GM12878 (cell line): ENCODE measurements at regions of chr11 and their contacts with region 1.

Region 1: DNA sequence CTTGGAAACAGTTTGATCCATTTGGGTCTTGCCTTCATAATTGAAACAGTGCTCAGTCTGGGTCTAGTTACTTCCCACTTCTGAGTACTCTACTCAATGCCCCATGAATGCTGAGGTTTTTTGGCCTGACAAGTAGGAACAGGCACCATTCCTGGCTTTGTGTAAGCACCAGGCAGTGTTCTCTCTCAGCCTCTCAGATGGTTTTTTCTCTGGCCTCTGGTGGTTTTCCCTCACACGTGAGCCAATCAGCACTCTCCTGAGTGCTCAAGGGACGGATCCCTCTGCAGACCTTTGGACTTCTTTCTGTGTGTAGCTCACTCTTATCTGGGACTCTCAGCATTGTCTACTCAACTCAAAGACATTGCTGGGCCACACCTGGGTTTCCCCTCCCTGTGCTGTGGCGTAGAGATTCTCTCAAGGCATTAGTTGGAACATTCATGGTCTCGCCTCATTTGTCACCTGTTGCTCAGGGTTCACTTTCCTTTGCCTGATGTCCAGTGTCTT is 21.3 kb downstream of the SIK2 start:
- DNase-seq: peak; percentile 60
- ATAC-seq: peak; percentile 99
- H3K4me3 ChIP-seq: no peak overlapping the region
- H3K27ac ChIP-seq: peak overlapping the region; percentile 12; the same call in 1 of the 2 replicates
- H3K4me1 ChIP-seq: no peaks in the 10 kb centered on the region
- H3K27me3 ChIP-seq: no peaks in the 10 kb centered on the region
- CTCF ChIP-seq: no peak
- EP300 ChIP-seq: 0 out of 4 replicates have a peak, but pooled peaks of 1 of the 2 experiments have one; percentile 15
- POLR2A ChIP-seq: no peak
- RAD21 ChIP-seq: no peak

Region 2: DNA sequence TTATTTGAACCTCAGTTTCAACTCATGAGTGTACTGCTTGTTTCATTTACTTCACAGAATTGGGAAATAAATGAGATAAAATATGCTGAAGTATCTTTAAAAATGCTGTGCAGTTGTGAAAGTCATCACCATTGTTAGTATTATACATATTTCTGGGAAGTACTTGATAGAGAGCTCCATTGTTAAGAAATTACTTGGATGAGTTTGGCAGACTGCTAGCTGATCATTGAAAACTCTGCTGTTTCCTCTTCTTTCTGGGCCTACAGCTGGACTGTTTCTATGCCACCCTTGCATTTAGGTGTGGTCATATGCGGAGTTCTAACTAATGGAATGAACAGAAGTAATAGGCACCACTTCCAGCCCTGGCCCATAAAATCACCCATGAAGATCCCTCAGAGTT is 11.4 kb before region 1 on chr11:
- CTCF ChIA-PET with region 1: interaction called, 3 read pairs
- POLR2A ChIA-PET with region 1: interaction called, 4 read pairs
- RAD21 ChIA-PET with region 1: interaction called, 7 read pairs
- SMC1A ChIA-PET with region 1: interaction called, 16 read pairs
- in situ Hi-C with region 1: no loop called
- intact Hi-C with region 1: no loop called
- DNase-seq: no peak
- ATAC-seq: no peak
- H3K4me3 ChIP-seq: no peak overlapping the region
- H3K27ac ChIP-seq: no peak overlapping the region
- H3K4me1 ChIP-seq: no peaks in the 10 kb centered on the region
- H3K27me3 ChIP-seq: no peaks in the 10 kb centered on the region
- CTCF ChIP-seq: no peak
- EP300 ChIP-seq: no peak
- POLR2A ChIP-seq: no peak
- RAD21 ChIP-seq: no peak

Region 3: DNA sequence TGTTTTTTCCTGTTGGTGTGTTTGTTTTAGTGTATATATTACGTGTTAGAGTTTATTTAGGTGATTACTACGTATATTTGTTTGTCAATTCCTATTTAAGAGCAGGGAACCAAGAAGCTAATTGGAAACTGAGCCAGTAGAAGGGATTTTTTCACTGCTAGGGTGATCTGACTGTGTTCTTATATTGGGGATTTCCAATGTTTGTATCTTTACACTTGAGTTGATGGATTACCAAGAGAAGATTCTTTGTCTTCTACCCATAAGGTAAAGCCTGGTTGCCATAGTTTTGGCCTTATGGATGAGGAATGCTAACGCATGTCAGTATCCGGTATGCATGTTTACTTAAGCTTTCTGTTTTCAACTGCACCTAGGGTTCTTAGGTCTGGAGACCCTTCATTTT is 14.3 kb after region 1 on chr11:
- CTCF ChIA-PET with region 1: interaction called, 5 read pairs
- POLR2A ChIA-PET with region 1: interaction called, 10 read pairs
- RAD21 ChIA-PET with region 1: interaction called, 3 read pairs
- SMC1A ChIA-PET with region 1: interaction called, 15 read pairs
- in situ Hi-C with region 1: no loop called
- intact Hi-C with region 1: no loop called
- DNase-seq: peak; percentile 21
- ATAC-seq: peak; percentile 89
- H3K4me3 ChIP-seq: no peak overlapping the region; the same call in 1 of the 2 replicates
- H3K27ac ChIP-seq: peak overlapping the region; percentile 27; the same call in 1 of the 2 replicates
- H3K4me1 ChIP-seq: peaks cover 2% of the 10 kb centered on the region; the same call in 1 of the 2 replicates
- H3K27me3 ChIP-seq: no peaks in the 10 kb centered on the region
- CTCF ChIP-seq: no peak
- EP300 ChIP-seq: no peak; a peak in 1 of 4 replicates
- POLR2A ChIP-seq: no peak
- RAD21 ChIP-seq: no peak